RWPE1 (cell line): ENCODE measurements at regions of chr12 and their contacts with region 1.

Region 1: DNA sequence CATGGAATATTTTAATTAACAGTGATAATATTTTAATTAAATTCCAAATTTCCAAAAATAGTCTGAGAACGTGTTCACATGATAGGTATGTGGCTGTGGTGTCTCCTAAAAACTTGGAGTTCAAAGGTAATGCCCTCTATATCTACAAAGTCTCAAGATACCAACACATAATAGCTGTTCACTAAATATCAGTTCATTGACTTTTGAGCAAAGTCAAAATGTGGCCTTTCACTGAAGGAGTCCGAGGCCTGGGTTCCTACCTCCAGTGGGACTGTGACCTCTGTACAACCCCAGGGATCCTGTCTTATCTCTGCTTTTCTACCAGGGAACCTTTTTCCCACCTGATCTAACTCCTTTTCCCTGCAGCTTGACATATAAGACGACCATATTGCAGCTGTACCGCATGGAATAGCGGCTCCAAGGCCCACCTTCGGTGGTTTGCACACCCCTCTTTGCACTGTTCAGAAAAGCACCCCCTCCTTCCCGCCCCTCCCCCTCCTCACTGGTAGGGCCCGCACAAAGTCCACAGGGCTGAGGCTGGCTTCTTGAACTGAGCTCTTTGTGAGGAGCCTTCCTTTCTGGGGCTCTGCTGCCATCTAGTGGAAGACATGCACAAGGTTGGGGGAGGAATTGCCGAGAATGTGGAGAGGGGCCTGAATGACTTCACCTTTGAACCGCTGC is 3.1 kb downstream of the CCND2 start:
- DNase-seq: peak; percentile 76
- H3K27ac ChIP-seq: no peak overlapping the region
- CTCF ChIP-seq: peak; percentile 67

Region 2: GRCh38 chr12:3885277-3886094 is 391.2 kb before region 1 on chr12:
- CTCF ChIA-PET with region 1: interaction called, 27 read pairs
- POLR2A ChIA-PET with region 1: no interaction called
- DNase-seq: peak; percentile 11
- H3K27ac ChIP-seq: no peak overlapping the region
- CTCF ChIP-seq: peak; percentile 66

Region 3: DNA sequence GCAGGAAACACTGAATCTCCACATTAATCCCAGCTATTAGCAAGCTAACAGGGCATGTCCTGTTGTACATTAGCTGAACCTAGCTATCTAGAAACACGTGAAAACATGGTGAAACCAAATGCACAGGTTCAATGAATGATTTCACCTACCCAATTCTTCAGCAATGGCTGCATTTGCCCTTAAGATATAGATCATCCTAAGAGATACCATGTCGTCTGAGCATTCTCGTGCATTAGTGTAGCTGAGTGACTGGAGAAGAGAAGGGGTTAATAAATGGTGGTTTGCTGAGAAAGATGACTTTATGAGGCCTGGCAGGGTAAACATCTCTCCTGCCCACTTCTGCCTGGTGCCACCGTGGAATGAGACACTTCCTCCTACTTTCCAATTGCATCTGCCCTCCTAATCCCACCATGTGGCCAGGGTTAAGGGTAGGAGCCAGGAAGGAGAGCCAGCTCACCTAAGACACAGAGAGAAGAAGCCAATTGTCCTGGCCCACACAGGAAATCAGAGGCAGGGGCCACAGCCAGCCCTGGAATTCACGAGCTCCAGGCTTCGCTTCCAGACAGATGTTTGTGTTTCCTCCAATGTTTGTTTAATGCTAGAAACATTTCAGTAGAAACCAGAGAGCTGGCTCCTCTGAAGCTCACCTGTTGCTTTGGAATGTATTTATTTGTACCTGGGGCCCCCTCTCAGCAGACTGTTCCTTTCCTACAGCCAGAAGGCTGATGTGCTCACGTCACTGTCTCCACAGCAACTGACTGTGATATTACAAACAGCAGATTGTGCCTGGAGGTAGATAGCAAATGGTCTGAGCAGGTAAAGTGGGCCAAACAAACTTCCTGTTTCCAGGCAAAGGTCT is 277.5 kb before region 1 on chr12:
- CTCF ChIA-PET with region 1: interaction called, 15 read pairs
- POLR2A ChIA-PET with region 1: interaction called, 3 read pairs
- DNase-seq: peak; percentile 49
- H3K27ac ChIP-seq: peak overlapping the region; percentile 49; the same call in 1 of the 2 replicates
- CTCF ChIP-seq: no peak

Region 4: GRCh38 chr12:4030929-4031702 is 245.5 kb before region 1 on chr12:
- CTCF ChIA-PET with region 1: interaction called, 39 read pairs
- POLR2A ChIA-PET with region 1: interaction called, 3 read pairs
- DNase-seq: peak; percentile 97
- H3K27ac ChIP-seq: peak overlapping the region; percentile 90
- CTCF ChIP-seq: no peak

Region 5: GRCh38 chr12:4037747-4038312 is 238.8 kb before region 1 on chr12:
- CTCF ChIA-PET with region 1: interaction called, 39 read pairs
- POLR2A ChIA-PET with region 1: interaction called, 3 read pairs
- DNase-seq: peak; percentile 39
- H3K27ac ChIP-seq: no peak overlapping the region
- CTCF ChIP-seq: peak; percentile 44; the same call in 1 of the 2 replicates

Region 6: GRCh38 chr12:4395818-4396217 is 119.2 kb after region 1 on chr12:
- CTCF ChIA-PET with region 1: no interaction called
- POLR2A ChIA-PET with region 1: no interaction called
- DNase-seq: no peak
- H3K27ac ChIP-seq: no peak overlapping the region
- CTCF ChIP-seq: no peak